CD4-positive, alpha-beta memory T cell (primary cell): ENCODE measurements at regions of chr13 and their contacts with region 1.

Region 1: DNA sequence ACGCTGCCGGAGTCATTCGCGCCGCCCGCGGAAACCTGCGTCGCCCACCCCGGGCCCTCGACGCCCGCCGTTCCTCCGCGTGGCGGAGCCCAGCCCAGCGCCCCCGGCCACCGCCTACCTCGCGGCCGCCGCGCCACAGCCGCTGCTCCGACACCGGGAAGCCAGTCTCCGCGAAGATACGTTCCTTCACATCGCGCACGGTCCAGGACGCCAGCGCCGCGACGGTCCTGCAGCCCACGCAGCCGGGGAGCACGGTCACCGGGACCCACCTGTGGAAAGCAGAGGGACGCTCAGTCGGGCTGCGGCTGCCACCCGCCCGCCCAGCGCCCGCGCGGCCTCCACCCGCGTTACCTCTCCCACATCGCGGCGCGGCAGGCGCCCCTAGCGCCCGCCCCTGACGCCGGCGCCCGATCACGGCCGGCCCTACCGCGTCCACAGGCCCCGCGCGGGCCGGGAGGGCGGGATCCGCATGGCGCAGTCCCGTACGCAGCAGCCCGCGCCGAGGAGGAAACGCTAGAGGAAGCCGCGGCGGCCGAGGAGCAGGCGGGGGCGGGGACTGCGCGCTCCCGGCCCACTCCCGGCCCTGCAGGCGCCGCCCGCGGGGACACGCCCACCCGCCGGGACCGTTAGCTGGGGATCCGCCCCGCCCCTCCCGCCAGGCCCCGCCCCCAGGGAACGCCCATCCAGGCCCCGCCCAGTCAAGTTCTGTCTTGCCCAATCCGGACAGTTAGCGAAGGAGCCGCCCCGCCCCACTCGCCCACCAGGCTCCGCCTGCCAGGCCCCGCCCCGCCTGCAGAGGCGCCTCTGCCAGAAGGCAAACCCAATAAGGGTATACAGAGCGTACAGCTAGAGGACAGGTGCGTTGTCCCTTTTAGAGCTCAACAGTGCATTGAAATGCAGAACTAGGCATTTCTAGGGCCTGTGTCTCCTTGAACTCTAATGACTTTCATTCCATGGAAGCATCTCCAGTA is 58.2 kb downstream of the SACS start:
- DNase-seq: peak; percentile 91 to 96 (median 95)
- H3K4me3 ChIP-seq: peak overlapping the region in 1 of 2 donors; percentile 58
- H3K4me3 Mint-ChIP-seq: peak overlapping the region; percentile 65 to 86 (median 84)
- H3K27ac ChIP-seq: peak overlapping the region; percentile 69
- H3K27ac Mint-ChIP-seq: peak overlapping the region; percentile 67 to 95 (median 87)
- H3K4me1 ChIP-seq: peaks cover 64% of the 10 kb centered on the region
- H3K4me1 Mint-ChIP-seq: peaks cover 45 to 78% (median 68%) of the 10 kb centered on the region in 4 donors
- H3K27me3 ChIP-seq: no peaks in the 10 kb centered on the region
- H3K27me3 Mint-ChIP-seq: no peaks in the 10 kb centered on the region

Region 2: DNA sequence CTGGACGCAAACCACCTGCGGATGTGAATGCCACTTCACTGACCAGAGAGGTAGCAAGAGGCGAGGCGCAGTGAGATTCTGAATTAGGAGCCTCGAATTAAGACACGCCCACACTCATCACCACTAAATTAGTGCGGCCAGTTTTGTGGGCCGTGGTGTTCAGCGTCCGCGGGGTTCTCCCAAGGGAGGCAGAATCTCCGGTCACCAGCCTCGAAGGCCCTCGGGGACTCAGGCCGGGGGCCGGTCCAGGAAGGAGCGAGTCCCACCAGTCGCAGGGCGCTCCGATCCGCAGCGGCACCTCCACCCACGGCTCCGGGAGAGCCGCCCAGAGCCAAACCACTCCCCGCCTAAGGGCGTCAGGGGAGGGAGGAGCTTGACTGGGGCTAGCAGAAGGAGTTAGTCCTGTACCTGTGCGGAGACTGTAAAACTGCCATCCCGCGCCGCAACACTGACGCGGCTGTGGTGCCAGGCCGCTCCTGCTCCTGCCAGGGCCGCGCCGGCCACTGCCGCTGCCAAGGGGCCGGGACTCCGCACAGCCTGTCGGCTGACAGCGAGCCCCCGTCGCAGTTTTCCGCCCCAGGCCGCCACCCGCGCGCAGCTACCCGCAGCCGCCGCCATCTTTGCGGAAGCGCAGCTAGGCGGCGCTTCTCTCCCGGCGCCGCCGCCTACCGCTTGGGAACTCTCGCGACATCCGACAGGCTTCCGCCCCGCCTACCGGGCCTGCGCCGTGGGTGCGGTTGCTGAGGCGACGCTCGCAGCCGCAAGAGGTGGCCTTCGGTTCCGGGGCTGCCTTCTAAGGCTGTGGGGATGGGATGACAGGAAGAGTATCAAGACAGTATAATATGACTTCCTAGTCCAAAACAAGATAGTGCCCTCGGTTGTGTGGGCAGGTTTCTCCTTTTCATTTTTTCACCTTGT is 1771.5 kb before region 1 on chr13 and contains the start of gene MICU2:
- CTCF ChIA-PET with region 1: no interaction called
- POLR2A ChIA-PET with region 1: no interaction called
- intact Hi-C with region 1: loop called (anchors 5 kb)
- DNase-seq: peak; percentile 96 to 97 (median 97)
- H3K4me3 ChIP-seq: peak within 1 kb of the TSS; percentile 78 to 83
- H3K4me3 Mint-ChIP-seq: peak within 1 kb of the TSS; percentile 86 to 97 (median 89)
- H3K27ac ChIP-seq: peak within 1 kb of the TSS; percentile 85
- H3K27ac Mint-ChIP-seq: peak within 1 kb of the TSS; percentile 90 to 97 (median 95)
- H3K4me1 ChIP-seq: peaks cover 36% of the 10 kb centered on the region
- H3K4me1 Mint-ChIP-seq: peaks cover 28 to 58% (median 36%) of the 10 kb centered on the region in 4 donors
- H3K27me3 ChIP-seq: no peaks in the 10 kb centered on the region
- H3K27me3 Mint-ChIP-seq: peaks cover 4% of the 10 kb centered on the region in 2 donors
- total RNA-seq, gene MICU2: 46.0 to 50.3 TPM

Region 3: GRCh38 chr13:23466144-23467002 is 91.1 kb after region 1 on chr13:
- CTCF ChIA-PET with region 1: no interaction called
- POLR2A ChIA-PET with region 1: no interaction called
- intact Hi-C with region 1: loop called (anchors 5 kb)
- DNase-seq: peak; percentile 43 to 65 (median 63)
- H3K4me3 ChIP-seq: peak overlapping the region in 1 of 2 donors; percentile 44
- H3K4me3 Mint-ChIP-seq: peak overlapping the region; percentile 76 to 89 (median 83)
- H3K27ac ChIP-seq: no peak overlapping the region
- H3K27ac Mint-ChIP-seq: peak overlapping the region in 3 of 7 donors; percentile 11 to 69 (median 63)
- H3K4me1 ChIP-seq: peaks cover 4% of the 10 kb centered on the region
- H3K4me1 Mint-ChIP-seq: peaks cover 0 to 8% (median 2%) of the 10 kb centered on the region in 4 donors
- H3K27me3 ChIP-seq: no peaks in the 10 kb centered on the region
- H3K27me3 Mint-ChIP-seq: peaks cover 7% of the 10 kb centered on the region in 2 donors

Region 4: DNA sequence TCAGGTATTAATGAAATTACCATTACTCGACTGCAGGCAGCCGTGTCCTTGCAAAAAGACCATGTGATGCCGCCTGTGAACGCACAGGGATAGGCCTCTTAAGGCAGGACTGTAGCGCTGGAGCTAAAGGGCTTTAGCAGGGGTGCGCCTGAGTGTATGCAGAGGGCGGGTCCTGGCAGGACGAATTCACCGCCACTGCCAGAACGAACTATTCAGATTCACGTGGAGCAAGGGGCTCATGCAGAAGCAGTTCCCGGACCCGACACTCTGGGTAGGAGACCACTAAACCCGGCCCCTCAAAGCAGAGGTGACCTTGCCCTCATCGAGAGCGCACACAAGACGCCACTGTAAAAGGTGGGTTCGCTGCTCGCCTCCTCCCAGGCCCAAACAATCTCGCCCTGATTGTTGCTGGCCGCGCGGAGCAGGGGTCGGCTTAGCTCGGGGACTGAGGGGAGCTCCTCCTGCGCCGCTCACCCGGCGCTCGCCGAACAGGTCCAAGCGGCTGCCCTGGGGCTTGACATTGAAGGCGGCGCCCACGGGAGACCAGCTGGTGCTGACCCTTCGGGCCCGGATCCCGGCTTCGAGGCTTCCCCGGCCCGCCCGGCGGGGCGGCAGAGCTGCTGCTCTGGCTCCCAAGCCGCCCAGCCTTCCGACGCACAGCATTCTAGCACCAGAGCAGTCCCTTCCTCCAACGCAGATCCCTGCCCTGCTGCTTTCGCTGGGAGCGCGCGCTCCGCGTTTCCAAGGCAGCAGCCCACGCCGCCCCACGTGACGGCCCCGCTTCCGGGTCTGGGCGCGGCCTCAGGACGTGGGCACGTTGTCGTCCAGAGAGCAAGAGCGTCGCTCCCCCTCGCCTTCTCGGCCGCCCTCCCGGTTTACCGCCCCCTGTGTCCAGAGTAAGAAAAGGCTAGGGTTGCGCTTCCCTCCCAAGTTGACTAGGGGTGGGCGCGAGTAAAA is 513.6 kb after region 1 on chr13 and contains the start of gene MIPEP:
- CTCF ChIA-PET with region 1: no interaction called
- POLR2A ChIA-PET with region 1: interaction called, 4 read pairs
- intact Hi-C with region 1: loop called (anchors 1 kb)
- DNase-seq: peak; percentile 82 to 87 (median 84)
- H3K4me3 ChIP-seq: peak within 1 kb of the TSS; percentile 43 to 88
- H3K4me3 Mint-ChIP-seq: peak within 1 kb of the TSS; percentile 89 to 95 (median 93)
- H3K27ac ChIP-seq: peak within 1 kb of the TSS; percentile 64
- H3K27ac Mint-ChIP-seq: peak within 1 kb of the TSS; percentile 75 to 92 (median 89)
- H3K4me1 ChIP-seq: peaks cover 16% of the 10 kb centered on the region
- H3K4me1 Mint-ChIP-seq: peaks cover 12 to 26% (median 19%) of the 10 kb centered on the region in 4 donors
- H3K27me3 ChIP-seq: no peaks in the 10 kb centered on the region
- H3K27me3 Mint-ChIP-seq: no peaks in the 10 kb centered on the region
- total RNA-seq, gene MIPEP: 8.8 to 9.1 TPM

Region 5: GRCh38 chr13:24254146-24254841 is 879.0 kb after region 1 on chr13:
- CTCF ChIA-PET with region 1: no interaction called
- POLR2A ChIA-PET with region 1: interaction called, 4 read pairs
- intact Hi-C with region 1: loop called (anchors 10 kb)
- DNase-seq: peak; percentile 78 to 93 (median 83)
- H3K4me3 ChIP-seq: peak overlapping the region; percentile 94 to 98
- H3K4me3 Mint-ChIP-seq: peak overlapping the region; percentile 92 to 99 (median 97)
- H3K27ac ChIP-seq: peak overlapping the region; percentile 87
- H3K27ac Mint-ChIP-seq: peak overlapping the region; percentile 95 to 100 (median 97)
- H3K4me1 ChIP-seq: peaks cover 88% of the 10 kb centered on the region
- H3K4me1 Mint-ChIP-seq: peaks cover 62 to 99% (median 81%) of the 10 kb centered on the region in 4 donors
- H3K27me3 ChIP-seq: no peaks in the 10 kb centered on the region
- H3K27me3 Mint-ChIP-seq: no peaks in the 10 kb centered on the region